Posterior cingulate gyrus (tissue), 11 donors: ENCODE measurements at regions of chr12 and their contacts with region 1.

Region 1: DNA sequence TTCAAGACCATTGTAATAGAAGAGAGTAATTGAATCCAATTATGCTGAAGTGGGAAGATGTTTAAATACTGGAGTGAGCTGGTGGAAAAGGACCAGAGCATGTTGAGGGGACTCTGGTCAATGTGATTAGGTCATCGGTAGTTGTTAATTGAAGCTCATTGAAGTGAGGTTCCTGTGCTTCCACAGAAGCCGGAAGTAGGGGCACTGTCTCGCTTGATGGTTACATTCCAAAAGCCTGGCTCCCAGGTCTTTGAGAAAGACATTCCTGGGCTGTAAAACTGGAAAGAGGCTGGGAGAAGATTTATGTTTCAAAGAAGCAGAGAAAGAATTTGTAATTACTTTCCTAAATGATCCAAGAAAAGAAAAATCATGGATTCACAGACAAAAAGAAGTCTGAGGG is 12.3 kb upstream of the CLECL1 start:
- DNase-seq: no peak

Region 2: GRCh38 chr12:10212201-10213131 is 467.3 kb after region 1 on chr12 and contains the start of gene GABARAPL1:
- intact Hi-C with region 1: loop called (anchors 5 kb)
- DNase-seq: peak; percentile 90 to 99 (median 94)